AG04450 (cell line): ENCODE measurements at regions of chr10 and their contacts with region 1.

Region 1: DNA sequence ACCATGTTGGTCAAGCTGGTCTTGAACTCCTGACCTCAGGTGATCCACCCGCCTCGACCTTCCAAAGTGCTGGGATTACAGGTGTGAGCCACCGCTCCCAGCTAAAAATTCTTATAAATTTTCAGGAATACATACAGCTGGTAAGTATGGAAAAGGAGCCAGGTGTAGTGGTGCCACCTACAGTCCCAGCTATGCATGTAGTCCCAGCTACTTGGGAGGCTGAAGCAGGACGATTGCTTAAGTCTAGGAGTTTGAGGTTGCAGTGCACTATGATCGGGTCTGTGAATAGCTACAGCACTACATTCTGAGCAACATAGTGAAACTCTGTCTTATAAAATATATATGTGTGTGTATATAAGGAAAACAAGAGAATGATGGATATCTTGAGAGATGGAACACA is 19.0 kb downstream of the LDB1 start:
- DNase-seq: no peak
- H3K4me3 ChIP-seq: no peak overlapping the region
- H3K27ac ChIP-seq: no peak overlapping the region
- H3K27me3 ChIP-seq: no peaks in the 10 kb centered on the region
- CTCF ChIP-seq: no peak

Region 2: DNA sequence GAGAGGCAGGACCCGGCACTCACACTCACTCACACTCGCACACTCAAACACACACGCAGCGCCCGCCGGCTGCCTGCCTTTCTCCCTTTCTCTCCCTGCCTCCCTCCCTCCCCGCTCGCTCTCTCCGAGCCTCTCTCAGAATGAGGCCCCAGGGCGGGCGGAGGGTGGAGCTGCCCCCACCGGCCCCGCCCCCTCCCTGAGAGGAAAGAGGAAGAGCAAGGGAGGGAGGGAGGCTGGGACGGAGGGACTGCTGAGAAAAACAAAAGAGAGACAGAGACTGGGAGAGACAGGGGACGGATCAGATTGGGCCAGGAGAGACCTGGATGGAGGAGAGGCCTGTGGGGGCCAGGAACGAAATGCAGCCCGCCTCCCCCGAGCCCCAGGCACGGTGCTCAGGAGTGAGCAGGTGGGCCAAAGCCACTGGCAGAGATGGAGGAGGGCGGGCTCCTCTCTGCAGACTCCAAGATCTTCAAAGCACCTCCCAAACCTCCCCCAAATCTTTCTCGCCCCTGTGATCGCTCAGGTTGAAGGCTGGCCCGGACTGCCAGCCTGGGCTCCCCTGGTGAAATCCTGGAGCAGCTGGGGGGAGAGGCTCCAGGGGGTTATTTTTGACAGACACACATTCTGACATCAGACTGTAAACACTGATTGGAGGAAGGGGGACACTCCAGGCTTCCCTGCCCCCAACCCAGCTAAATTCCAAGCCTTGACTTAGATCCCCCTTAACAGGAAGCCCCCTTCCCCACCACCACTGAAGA is 13.9 kb after region 1 on chr10:
- CTCF ChIA-PET with region 1: interaction called, 6 read pairs
- POLR2A ChIA-PET with region 1: interaction called, 14 read pairs
- DNase-seq: no peak
- H3K4me3 ChIP-seq: peak overlapping the region; percentile 89
- H3K27ac ChIP-seq: peak overlapping the region; percentile 52
- H3K27me3 ChIP-seq: no peaks in the 10 kb centered on the region
- CTCF ChIP-seq: no peak

Region 3: GRCh38 chr10:102133373-102134195 is 32.4 kb after region 1 on chr10:
- CTCF ChIA-PET with region 1: no interaction called
- POLR2A ChIA-PET with region 1: no interaction called
- DNase-seq: peak; percentile 46
- H3K4me3 ChIP-seq: peak overlapping the region; percentile 96
- H3K27ac ChIP-seq: peak overlapping the region; percentile 93
- H3K27me3 ChIP-seq: no peaks in the 10 kb centered on the region
- CTCF ChIP-seq: no peak